ENCODE measurements at regions of chr17 and their contacts with region 1.

Region 1: GRCh38 chr17:5526821-5527598 is 40.6 kb downstream of the MIS12 start:
- H3K4me3 ChIP-seq: no peak overlapping the region
- H3K27ac ChIP-seq: no peak overlapping the region; the same call in 1 of the 2 replicates
- H3K4me1 ChIP-seq: peaks cover 8% of the 10 kb centered on the region; the same call in 1 of the 2 replicates
- CTCF ChIP-seq: no peak

Region 2: GRCh38 chr17:5304636-5305035 is 222.4 kb before region 1 on chr17:
- CTCF ChIA-PET with region 1: no interaction called
- POLR2A ChIA-PET with region 1: no interaction called
- H3K4me3 ChIP-seq: no peak overlapping the region
- H3K27ac ChIP-seq: no peak overlapping the region
- H3K4me1 ChIP-seq: peaks cover 12% of the 10 kb centered on the region
- CTCF ChIP-seq: no peak

Region 3: GRCh38 chr17:5325851-5326250 is 201.2 kb before region 1 on chr17:
- CTCF ChIA-PET with region 1: no interaction called
- POLR2A ChIA-PET with region 1: no interaction called
- H3K4me3 ChIP-seq: no peak overlapping the region
- H3K27ac ChIP-seq: no peak overlapping the region
- H3K4me1 ChIP-seq: no peaks in the 10 kb centered on the region
- CTCF ChIP-seq: no peak

Region 4: GRCh38 chr17:5486204-5487124 is 40.5 kb before region 1 on chr17 and contains the start of gene MIS12:
- CTCF ChIA-PET with region 1: no interaction called
- POLR2A ChIA-PET with region 1: interaction called, 32 read pairs
- H3K4me3 ChIP-seq: peak within 1 kb of the TSS; percentile 96
- H3K27ac ChIP-seq: peak within 1 kb of the TSS; percentile 100
- H3K4me1 ChIP-seq: no peaks in the 10 kb centered on the region
- CTCF ChIP-seq: no peak

Region 5: GRCh38 chr17:5500589-5501391 is 26.2 kb before region 1 on chr17:
- CTCF ChIA-PET with region 1: interaction called, 7 read pairs
- POLR2A ChIA-PET with region 1: interaction called, 14 read pairs
- H3K4me3 ChIP-seq: peak overlapping the region; percentile 60
- H3K27ac ChIP-seq: no peak overlapping the region; the same call in 1 of the 2 replicates
- H3K4me1 ChIP-seq: peaks cover 3% of the 10 kb centered on the region; the same call in 1 of the 2 replicates
- CTCF ChIP-seq: no peak

Region 6: DNA sequence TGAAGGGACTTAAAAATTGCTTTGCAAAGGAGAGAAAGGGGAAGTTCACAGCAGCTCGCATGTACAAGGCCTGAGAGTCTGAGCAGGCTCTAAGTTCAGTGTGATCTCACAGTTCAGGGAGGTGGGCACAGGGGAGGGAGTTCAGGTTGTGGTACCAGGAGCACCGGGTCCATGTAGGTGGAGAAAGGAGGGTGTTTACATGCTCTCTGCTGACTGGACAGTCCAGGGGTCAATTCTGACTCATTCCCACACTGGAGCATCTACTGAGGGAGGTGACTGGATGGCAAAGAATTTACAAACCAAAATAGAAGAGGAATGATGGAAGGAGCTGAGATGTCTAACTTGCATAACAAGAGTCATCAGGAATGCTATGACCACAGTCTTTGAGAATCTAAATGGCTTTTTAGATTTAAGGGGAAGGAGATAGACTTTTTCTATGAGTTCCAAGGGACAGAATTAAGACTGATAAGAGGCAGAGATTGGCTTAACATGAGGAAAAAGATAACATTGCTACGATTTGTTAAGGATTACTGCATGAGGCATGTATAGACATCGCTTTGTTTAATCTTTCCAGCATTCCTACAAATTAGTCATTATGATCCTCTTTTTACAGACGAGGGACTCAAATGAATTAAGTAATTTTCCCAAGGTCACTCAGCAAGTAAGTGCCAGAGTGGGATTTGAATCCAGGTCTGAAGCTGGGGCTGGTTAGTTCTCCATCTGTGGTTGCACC is 10.8 kb before region 1 on chr17:
- CTCF ChIA-PET with region 1: interaction called, 4 read pairs
- POLR2A ChIA-PET with region 1: interaction called, 10 read pairs
- H3K4me3 ChIP-seq: no peak overlapping the region
- H3K27ac ChIP-seq: no peak overlapping the region
- H3K4me1 ChIP-seq: no peaks in the 10 kb centered on the region
- CTCF ChIP-seq: no peak

Region 7: DNA sequence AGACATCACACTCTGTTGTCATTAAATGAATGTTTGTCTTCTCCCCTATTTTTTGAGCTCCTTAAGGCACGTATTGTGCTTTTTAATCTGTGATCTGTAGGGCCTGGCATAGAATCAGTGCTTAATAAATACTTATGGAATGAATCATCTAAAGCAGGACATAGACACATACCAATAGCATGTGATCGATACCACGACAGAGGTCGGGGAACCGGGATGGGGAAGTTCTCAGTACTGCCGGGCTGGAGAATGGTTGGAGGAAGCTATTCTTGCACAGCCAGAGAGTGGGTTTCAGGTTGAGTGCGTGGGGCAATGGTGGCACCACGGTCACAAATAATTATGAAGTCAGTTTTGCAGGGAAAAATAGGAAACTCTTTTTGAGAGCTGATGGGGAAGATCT is 30.5 kb after region 1 on chr17:
- CTCF ChIA-PET with region 1: no interaction called
- POLR2A ChIA-PET with region 1: no interaction called
- H3K4me3 ChIP-seq: no peak overlapping the region
- H3K27ac ChIP-seq: no peak overlapping the region
- H3K4me1 ChIP-seq: no peaks in the 10 kb centered on the region
- CTCF ChIP-seq: no peak

Measured in HEK293 (cell line).